GM23248 (cell line): ENCODE measurements at regions of chr7 and their contacts with region 1.

Region 1: GRCh38 chr7:148962823-148963582 is 65.3 kb downstream of the PDIA4 start:
- DNase-seq: peak; percentile 82
- H3K4me3 ChIP-seq: peak overlapping the region; percentile 78
- H3K27ac ChIP-seq: no peak overlapping the region
- H3K4me1 ChIP-seq: 0 out of 2 replicates have a peak, but pooled peaks cover 4% of the 10 kb centered on the region
- H3K27me3 ChIP-seq: no peaks in the 10 kb centered on the region

Region 2: DNA sequence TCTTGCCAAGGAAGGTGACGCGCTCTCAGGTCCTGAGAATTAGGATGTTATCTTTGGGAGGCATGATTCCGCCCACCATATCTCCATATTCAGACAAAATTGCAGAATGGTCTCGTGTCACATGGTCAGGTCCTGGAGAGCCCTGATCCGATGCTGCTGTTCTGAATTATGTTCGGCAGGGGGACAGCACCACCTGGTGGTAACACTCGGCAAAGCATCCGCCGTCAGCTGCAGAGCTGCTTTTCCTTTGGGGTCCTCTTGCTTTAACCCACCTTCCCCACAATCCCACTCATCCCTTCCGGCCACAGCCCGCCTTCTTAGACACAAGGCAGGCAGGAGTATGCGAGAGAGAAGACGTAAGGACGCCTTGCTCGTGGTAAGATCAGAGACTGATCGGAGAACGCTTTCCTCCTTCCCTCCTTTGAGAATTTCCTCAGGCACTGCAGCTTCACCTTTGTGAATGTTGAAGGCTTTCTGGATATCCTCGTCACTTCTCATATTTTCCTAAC is 700.2 kb before region 1 on chr7:
- in situ Hi-C with region 1: loop called (anchors 25 kb)
- DNase-seq: peak; percentile 57
- H3K4me3 ChIP-seq: peak overlapping the region; percentile 57; the same call in 1 of the 2 replicates
- H3K27ac ChIP-seq: no peak overlapping the region
- H3K4me1 ChIP-seq: no peaks in the 10 kb centered on the region
- H3K27me3 ChIP-seq: no peaks in the 10 kb centered on the region

Region 3: GRCh38 chr7:148503875-148504487 is 459.0 kb before region 1 on chr7:
- in situ Hi-C with region 1: loop called (anchors 10 kb)
- DNase-seq: peak; percentile 56
- H3K4me3 ChIP-seq: no peak overlapping the region
- H3K27ac ChIP-seq: no peak overlapping the region
- H3K4me1 ChIP-seq: no peaks in the 10 kb centered on the region
- H3K27me3 ChIP-seq: peaks cover 30% of the 10 kb centered on the region